Sigmoid colon (tissue), 7 donors: ENCODE measurements at regions of chr2 and their contacts with region 1.

Region 1: DNA sequence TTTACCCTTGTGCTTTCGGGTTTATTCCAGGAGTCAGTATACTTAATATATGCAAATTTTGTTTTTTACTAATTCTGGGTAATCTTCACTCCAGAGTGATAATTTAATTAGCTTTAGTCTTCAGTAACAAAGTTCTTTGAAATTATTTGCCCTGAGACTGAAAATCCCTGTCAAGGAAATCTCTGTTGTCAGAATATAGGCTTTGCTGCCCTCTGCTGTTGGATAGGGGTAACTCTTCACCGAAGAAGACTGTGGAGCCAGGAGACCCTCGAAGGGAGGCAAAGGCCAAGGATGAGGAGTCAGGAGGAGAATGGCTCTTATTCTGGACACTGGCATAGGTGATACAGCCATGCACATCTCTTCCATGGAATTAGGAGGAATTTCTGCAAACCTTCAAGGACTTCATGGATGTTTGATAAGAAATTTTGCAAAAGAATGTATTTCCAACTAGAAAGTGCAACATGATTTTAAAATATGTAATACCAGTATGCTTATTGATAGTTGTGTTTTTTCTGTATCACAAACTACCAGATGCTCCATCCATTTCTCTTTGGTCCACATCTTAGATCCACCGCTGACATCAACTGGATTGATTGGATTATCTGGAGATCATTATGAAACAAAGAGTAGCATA is 182.3 kb downstream of the RDH14 start:
- DNase-seq: no peak
- H3K4me3 ChIP-seq: no peak overlapping the region
- H3K27ac ChIP-seq: no peak overlapping the region
- H3K4me1 ChIP-seq: no peaks in the 10 kb centered on the region
- H3K27me3 ChIP-seq: no peaks in the 10 kb centered on the region
- CTCF ChIP-seq: peak in 3 of 4 experiments; percentile 38 to 68 (median 56)
- EP300 ChIP-seq: no peak
- POLR2A ChIP-seq: no peak

Region 2: GRCh38 chr2:17680119-17680518 is 698.0 kb before region 1 on chr2:
- intact Hi-C with region 1: no loop called
- DNase-seq: no peak
- H3K4me3 ChIP-seq: no peak overlapping the region
- H3K27ac ChIP-seq: no peak overlapping the region
- H3K4me1 ChIP-seq: no peaks in the 10 kb centered on the region
- H3K27me3 ChIP-seq: no peaks in the 10 kb centered on the region
- CTCF ChIP-seq: no peak
- EP300 ChIP-seq: no peak
- POLR2A ChIP-seq: no peak

Region 3: GRCh38 chr2:17719562-17720371 is 658.4 kb before region 1 on chr2:
- intact Hi-C with region 1: loop called (anchors 10 kb)
- DNase-seq: no peak
- H3K4me3 ChIP-seq: no peak overlapping the region
- H3K27ac ChIP-seq: no peak overlapping the region
- H3K4me1 ChIP-seq: no peaks in the 10 kb centered on the region
- H3K27me3 ChIP-seq: no peaks in the 10 kb centered on the region
- CTCF ChIP-seq: peak in 3 of 4 experiments; percentile 48 to 74 (median 64)
- EP300 ChIP-seq: no peak
- POLR2A ChIP-seq: no peak

Region 4: GRCh38 chr2:17851731-17852585 is 526.2 kb before region 1 on chr2:
- intact Hi-C with region 1: loop called (anchors 2 kb)
- DNase-seq: peak; percentile 71
- H3K4me3 ChIP-seq: no peak overlapping the region
- H3K27ac ChIP-seq: no peak overlapping the region
- H3K4me1 ChIP-seq: no peaks in the 10 kb centered on the region
- H3K27me3 ChIP-seq: no peaks in the 10 kb centered on the region
- CTCF ChIP-seq: peak; percentile 64 to 94 (median 80)
- EP300 ChIP-seq: peak in 1 of 4 donors; percentile 6
- POLR2A ChIP-seq: no peak

Region 5: DNA sequence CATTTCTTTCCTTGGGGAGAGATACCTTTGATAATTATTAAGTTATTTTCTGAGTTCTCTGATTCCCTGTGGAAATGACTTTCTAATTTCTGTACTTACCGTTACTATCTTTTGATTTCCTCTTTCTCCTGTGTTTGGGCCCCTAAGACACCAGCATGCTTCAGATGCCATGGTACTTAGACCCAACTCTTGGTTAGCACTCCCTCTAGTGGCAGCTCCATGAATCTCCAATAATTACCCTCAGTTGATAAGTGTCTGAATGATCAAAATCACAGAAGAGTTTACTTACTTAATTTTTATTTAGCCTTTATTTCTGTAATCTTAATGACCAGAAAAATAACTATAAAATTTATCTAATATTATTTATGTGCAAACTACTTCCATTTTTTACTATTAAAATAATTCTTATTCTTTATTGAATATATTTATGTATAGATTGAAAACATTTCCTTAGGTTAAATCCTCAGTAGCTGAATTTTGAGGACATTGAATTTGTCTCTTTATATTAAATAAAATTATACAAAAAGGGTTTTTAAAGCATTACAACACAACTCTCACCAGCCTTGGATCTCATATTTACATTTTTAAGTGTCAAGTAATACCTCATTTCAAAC is 199.3 kb before region 1 on chr2:
- intact Hi-C with region 1: loop called (anchors 10 kb)
- DNase-seq: no peak
- H3K4me3 ChIP-seq: no peak overlapping the region
- H3K27ac ChIP-seq: no peak overlapping the region
- H3K4me1 ChIP-seq: no peaks in the 10 kb centered on the region
- H3K27me3 ChIP-seq: peaks cover 0 to 5% (median 0%) of the 10 kb centered on the region in 3 donors
- CTCF ChIP-seq: peak; percentile 22 to 79 (median 50)
- EP300 ChIP-seq: no peak
- POLR2A ChIP-seq: no peak